HepG2 (cell line): ENCODE measurements at regions of chr2 and their contacts with region 1.

Region 1: GRCh38 chr2:227252831-227253230 is 72.2 kb upstream of the MFF start:
- DNase-seq: no peak
- ATAC-seq: no peak
- H3K4me3 ChIP-seq: no peak overlapping the region
- H3K27ac ChIP-seq: no peak overlapping the region
- H3K4me1 ChIP-seq: no peaks in the 10 kb centered on the region
- H3K27me3 ChIP-seq: no peaks in the 10 kb centered on the region
- CTCF ChIP-seq: no peak
- EP300 ChIP-seq: no peak
- POLR2A ChIP-seq: no peak
- RAD21 ChIP-seq: no peak

Region 2: DNA sequence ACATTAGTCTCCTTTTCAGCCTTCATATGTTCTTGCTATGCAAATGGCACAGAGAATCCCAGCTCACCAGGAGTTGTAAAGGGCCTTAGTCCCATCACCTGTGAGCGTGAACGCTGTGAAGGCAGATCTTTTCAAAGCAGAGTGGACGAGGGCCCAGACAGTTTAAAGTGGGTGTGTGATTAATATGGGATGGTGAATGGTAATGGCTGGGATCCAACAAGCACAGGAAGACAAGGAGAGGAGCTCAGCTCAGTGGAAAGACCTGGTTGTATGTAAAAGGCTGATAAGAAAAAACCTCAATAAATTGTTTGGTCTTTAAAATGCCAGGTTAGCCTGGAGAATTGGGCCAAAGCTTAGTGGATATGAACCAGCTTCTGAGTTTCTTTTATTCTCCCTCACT is 1527.1 kb before region 1 on chr2:
- CTCF ChIA-PET with region 1: no interaction called
- POLR2A ChIA-PET with region 1: no interaction called
- in situ Hi-C with region 1: no loop called
- intact Hi-C with region 1: loop called (anchors 5 kb)
- DNase-seq: no peak
- ATAC-seq: no peak
- H3K4me3 ChIP-seq: no peak overlapping the region
- H3K27ac ChIP-seq: no peak overlapping the region
- H3K4me1 ChIP-seq: no peaks in the 10 kb centered on the region
- H3K27me3 ChIP-seq: no peaks in the 10 kb centered on the region
- CTCF ChIP-seq: no peak
- EP300 ChIP-seq: no peak
- POLR2A ChIP-seq: no peak
- RAD21 ChIP-seq: no peak

Region 3: DNA sequence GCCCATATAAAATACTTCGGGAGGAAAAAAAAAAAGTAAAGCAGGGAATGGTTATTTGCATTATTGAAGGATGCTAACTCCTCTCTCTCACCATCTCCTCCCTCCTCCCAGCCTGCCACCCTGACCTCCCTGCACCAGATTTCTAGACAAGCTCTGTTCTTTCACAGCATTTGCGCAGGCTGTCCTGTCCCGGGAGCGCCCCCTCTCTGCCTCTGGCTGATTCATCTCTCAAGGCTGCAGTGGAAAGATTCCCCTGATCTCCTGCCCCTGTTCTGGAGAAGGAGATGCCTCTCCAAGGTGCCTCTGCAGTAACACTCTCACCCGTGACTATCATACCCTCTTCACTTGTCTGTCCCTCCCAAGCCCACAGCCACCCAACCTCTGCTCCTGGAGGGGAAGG is 127.3 kb before region 1 on chr2:
- CTCF ChIA-PET with region 1: no interaction called
- POLR2A ChIA-PET with region 1: no interaction called
- in situ Hi-C with region 1: no loop called
- intact Hi-C with region 1: no loop called
- DNase-seq: peak; percentile 25
- ATAC-seq: peak; percentile 85
- H3K4me3 ChIP-seq: no peak overlapping the region
- H3K27ac ChIP-seq: no peak overlapping the region
- H3K4me1 ChIP-seq: no peaks in the 10 kb centered on the region
- H3K27me3 ChIP-seq: peaks cover 0 to 11% of the 10 kb centered on the region in 2 experiments; a peak in 2 of 5 replicates
- CTCF ChIP-seq: peak; percentile 63
- EP300 ChIP-seq: no peak
- POLR2A ChIP-seq: no peak
- RAD21 ChIP-seq: no peak